Activated T-helper 1 cell treated with anti-CD3 and anti-CD28 coated beads, Interleukin-12 subunit alpha, Interleukin-12 subunit beta, Interleukin-2, Interleukin-4 antibody, amounts not matched to agents 30 ng/mL and 10 ng/mL and 1 ng/mL, durations not matched to agents 14 hours and 24 hours and 36 hours (primary cell): ENCODE measurements at regions of chr16 and their contacts with region 1.

Region 1: DNA sequence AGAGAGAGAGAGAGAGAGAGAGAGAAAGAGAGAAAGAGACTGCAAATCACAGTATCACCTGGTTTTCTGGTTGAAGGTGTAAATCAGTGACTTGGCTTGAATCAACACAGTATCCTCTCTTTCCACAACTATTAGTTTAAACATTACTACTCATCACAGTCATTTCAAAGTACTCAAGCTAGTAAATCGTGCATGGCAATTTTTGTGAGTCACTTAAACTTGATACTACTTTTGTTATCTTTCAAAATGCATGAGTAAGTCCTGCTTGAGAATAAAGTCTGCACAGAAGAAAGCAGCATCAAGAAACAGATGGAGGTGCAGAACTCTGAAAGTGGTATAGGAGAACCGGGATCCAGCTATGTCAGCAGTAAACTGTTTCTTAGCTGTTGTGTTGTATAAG is 535.4 kb downstream of the CDH8 start:
- DNase-seq: no peak
- H3K4me3 Mint-ChIP-seq: no peak overlapping the region
- H3K27ac Mint-ChIP-seq: no peak overlapping the region
- H3K4me1 Mint-ChIP-seq: no peaks in the 10 kb centered on the region
- H3K27me3 Mint-ChIP-seq: no peaks in the 10 kb centered on the region

Region 2: DNA sequence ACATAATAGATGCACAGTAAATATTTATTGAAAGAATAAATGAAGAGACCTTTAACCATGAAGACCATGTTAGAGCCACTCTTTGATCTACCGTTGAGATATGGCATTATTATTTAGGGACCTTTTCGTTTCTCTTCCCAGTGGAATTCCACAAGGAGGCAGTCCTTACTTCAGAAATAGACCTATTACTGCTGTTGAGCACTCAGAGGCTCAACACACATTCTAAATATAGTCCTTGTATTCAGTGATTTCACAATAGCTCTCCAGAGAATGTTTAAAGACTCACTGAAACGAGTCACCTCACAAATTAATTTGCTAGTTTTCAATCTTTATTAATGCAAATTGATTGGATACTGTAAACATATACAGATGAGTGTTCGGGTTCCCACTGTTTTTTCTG is 68.4 kb before region 1 on chr16:
- intact Hi-C with region 1: loop called (anchors 10 kb)
- DNase-seq: no peak
- H3K4me3 Mint-ChIP-seq: no peak overlapping the region
- H3K27ac Mint-ChIP-seq: no peak overlapping the region
- H3K4me1 Mint-ChIP-seq: no peaks in the 10 kb centered on the region
- H3K27me3 Mint-ChIP-seq: no peaks in the 10 kb centered on the region

Region 3: DNA sequence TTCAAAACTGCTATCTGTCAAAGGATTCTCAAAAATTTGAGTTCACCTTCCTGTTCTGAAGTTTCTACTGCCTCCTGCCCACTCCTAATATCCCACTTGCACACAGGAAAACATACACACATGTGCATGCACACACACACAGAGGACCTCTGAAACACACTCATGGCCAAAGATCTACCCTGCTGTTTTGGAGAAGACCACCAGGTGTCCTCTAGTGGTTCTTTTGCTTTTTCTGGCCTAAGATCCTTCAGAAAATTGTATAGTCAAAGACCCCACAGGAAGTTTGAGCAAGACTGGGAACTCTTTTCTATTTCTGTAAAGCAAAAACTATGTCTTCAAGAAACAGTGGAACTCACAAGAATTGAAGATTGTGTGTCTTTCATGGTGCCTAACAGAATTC is 445.2 kb after region 1 on chr16:
- intact Hi-C with region 1: no loop called
- DNase-seq: no peak
- H3K4me3 Mint-ChIP-seq: no peak overlapping the region
- H3K27ac Mint-ChIP-seq: no peak overlapping the region
- H3K4me1 Mint-ChIP-seq: no peaks in the 10 kb centered on the region
- H3K27me3 Mint-ChIP-seq: no peaks in the 10 kb centered on the region